Activated CD8-positive, alpha-beta T cell treated with anti-CD3 and anti-CD28 coated beads for 36 hours (primary cell): ENCODE measurements at regions of chr7 and their contacts with region 1.

Region 1: GRCh38 chr7:137626469-137627067 is 220.2 kb downstream of the DGKI start:
- DNase-seq: peak; percentile 56
- ATAC-seq: peak; percentile 37
- H3K4me3 Mint-ChIP-seq: no peak overlapping the region
- H3K27ac Mint-ChIP-seq: no peak overlapping the region
- H3K4me1 Mint-ChIP-seq: no peaks in the 10 kb centered on the region
- H3K27me3 Mint-ChIP-seq: peaks cover 14% of the 10 kb centered on the region
- CTCF ChIP-seq: peak; percentile 76

Region 2: DNA sequence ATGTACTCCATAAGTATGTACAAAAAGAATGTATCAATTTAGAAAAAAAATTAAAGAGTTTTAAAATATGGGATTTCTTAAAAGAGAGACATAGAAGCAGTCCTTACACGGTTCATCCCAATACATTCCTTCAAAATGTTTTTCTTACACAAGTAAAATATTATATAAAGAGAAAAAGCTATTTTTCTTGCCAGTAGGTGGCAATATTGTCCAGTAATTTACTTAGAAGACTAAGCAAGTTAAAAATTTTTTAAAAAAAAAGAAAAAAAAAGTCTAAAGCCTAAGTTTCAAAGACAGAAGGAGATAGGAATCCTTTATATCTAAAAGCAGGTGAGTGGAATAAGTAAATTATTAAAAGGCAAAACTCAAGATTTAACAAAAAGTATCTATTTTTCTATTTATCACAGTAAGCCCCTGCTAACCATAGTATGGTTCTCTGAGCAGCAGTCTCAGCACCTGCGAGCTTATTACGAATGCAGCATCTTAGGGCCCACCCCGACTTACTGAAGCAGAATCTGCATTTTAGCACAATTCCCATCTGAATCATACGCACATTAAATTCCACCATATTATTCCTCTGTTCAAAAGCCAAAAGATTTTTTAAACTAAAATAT is 20.4 kb before region 1 on chr7:
- CTCF ChIA-PET with region 1: interaction called, 13 read pairs
- POLR2A ChIA-PET with region 1: interaction called, 3 read pairs
- intact Hi-C with region 1: no loop called
- DNase-seq: no peak
- ATAC-seq: no peak
- H3K4me3 Mint-ChIP-seq: no peak overlapping the region
- H3K27ac Mint-ChIP-seq: no peak overlapping the region
- H3K4me1 Mint-ChIP-seq: no peaks in the 10 kb centered on the region
- H3K27me3 Mint-ChIP-seq: peaks cover 7% of the 10 kb centered on the region
- CTCF ChIP-seq: peak; percentile 46

Region 3: GRCh38 chr7:137613006-137613405 is 13.6 kb before region 1 on chr7:
- CTCF ChIA-PET with region 1: interaction called, 31 read pairs
- POLR2A ChIA-PET with region 1: no interaction called
- intact Hi-C with region 1: no loop called
- DNase-seq: no peak
- ATAC-seq: no peak
- H3K4me3 Mint-ChIP-seq: no peak overlapping the region
- H3K27ac Mint-ChIP-seq: no peak overlapping the region
- H3K4me1 Mint-ChIP-seq: no peaks in the 10 kb centered on the region
- H3K27me3 Mint-ChIP-seq: peaks cover 9% of the 10 kb centered on the region
- CTCF ChIP-seq: no peak

Region 4: GRCh38 chr7:137642472-137642871 is 15.9 kb after region 1 on chr7:
- CTCF ChIA-PET with region 1: interaction called, 11 read pairs
- POLR2A ChIA-PET with region 1: no interaction called
- intact Hi-C with region 1: no loop called
- DNase-seq: no peak
- ATAC-seq: no peak
- H3K4me3 Mint-ChIP-seq: no peak overlapping the region
- H3K27ac Mint-ChIP-seq: no peak overlapping the region
- H3K4me1 Mint-ChIP-seq: no peaks in the 10 kb centered on the region
- H3K27me3 Mint-ChIP-seq: peaks cover 3% of the 10 kb centered on the region
- CTCF ChIP-seq: no peak